IMR-90 (cell line): ENCODE measurements at regions of chr1 and their contacts with region 1.

Region 1: GRCh38 chr1:29033829-29034466 is 89.8 kb downstream of the TMEM200B start:
- DNase-seq: peak; percentile 56
- ATAC-seq: peak; percentile 78
- H3K4me3 ChIP-seq: no peak overlapping the region
- H3K27ac ChIP-seq: no peak overlapping the region
- H3K4me1 ChIP-seq: no peaks in the 10 kb centered on the region
- H3K27me3 ChIP-seq: no peaks in the 10 kb centered on the region
- CTCF ChIP-seq: peak; percentile 87
- POLR2A ChIP-seq: no peak
- RAD21 ChIP-seq: peak; percentile 96

Region 2: GRCh38 chr1:28642847-28643635 is 390.9 kb before region 1 on chr1 and contains the start of gene TAF12:
- CTCF ChIA-PET with region 1: no interaction called
- POLR2A ChIA-PET with region 1: no interaction called
- dilution Hi-C with region 1: no loop called
- in situ Hi-C with region 1: no loop called
- intact Hi-C with region 1: loop called (anchors 10 kb)
- DNase-seq: peak; percentile 94
- ATAC-seq: peak; percentile 83
- H3K4me3 ChIP-seq: peak within 1 kb of the TSS; percentile 77
- H3K27ac ChIP-seq: peak within 1 kb of the TSS; percentile 94
- H3K4me1 ChIP-seq: peaks cover 1% of the 10 kb centered on the region
- H3K27me3 ChIP-seq: no peaks in the 10 kb centered on the region
- CTCF ChIP-seq: peak; percentile 51
- POLR2A ChIP-seq: peak; percentile 98
- RAD21 ChIP-seq: peak; percentile 44
- total RNA-seq, gene TAF12: 31.7 and 39.7 TPM in 2 replicates

Region 3: DNA sequence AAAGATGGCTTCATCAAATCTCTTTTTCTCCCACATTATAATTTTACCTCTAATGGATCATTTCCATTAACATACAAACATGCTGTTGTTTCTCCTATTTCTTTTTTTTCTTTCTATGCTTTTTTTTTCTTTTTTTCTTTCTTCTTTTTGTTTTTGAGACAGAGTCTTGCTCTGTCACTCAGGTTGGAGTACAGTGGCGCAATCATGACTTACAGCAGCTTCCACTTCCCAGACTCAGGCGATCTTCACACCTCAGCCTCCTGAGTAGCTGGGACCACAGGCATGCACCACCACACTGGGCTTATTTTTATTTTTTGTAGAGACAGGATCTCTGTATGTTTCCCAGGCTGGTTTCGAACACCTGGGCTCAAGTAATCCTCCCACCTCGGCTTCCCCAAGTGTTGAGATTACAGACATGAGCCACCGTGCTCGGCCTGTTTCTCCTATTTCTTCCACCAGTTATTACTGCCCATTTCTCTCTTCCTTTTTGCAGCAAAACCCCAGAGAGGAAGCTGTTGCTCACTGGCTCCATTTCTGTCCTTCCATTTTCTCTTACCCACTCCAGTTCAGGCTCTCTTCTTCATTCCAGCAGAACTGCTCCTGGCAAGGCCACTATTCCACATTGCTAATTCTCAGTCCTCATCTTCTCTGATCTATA is 254.1 kb before region 1 on chr1:
- CTCF ChIA-PET with region 1: interaction called, 5 read pairs
- POLR2A ChIA-PET with region 1: no interaction called
- dilution Hi-C with region 1: no loop called
- in situ Hi-C with region 1: loop called (anchors 10 kb)
- intact Hi-C with region 1: loop called (anchors 5 kb)
- DNase-seq: no peak
- ATAC-seq: no peak
- H3K4me3 ChIP-seq: no peak overlapping the region
- H3K27ac ChIP-seq: no peak overlapping the region
- H3K4me1 ChIP-seq: peaks cover 2% of the 10 kb centered on the region; the same call in 1 of the 2 replicates
- H3K27me3 ChIP-seq: no peaks in the 10 kb centered on the region
- CTCF ChIP-seq: no peak
- POLR2A ChIP-seq: no peak
- RAD21 ChIP-seq: no peak

Region 4: DNA sequence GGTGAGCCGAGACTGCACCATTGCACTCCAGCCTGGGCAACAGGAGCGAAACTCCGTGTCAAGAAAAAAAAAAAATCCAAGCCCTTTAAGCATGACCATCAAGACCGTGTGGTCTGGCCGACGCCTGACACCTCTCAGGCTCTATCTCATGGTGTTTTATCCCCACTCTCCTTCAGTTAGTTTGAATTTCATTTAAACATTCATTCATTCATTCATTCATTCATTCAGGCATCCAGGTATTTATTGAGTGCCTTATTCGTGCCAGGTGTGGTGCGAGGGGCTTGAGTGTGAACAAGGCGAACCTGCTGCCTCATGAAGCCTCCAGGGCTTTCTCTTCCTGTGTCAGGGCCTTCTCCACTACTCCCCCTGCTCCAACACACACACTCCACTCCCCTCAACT is 244.5 kb before region 1 on chr1:
- CTCF ChIA-PET with region 1: interaction called, 5 read pairs
- POLR2A ChIA-PET with region 1: no interaction called
- dilution Hi-C with region 1: no loop called
- in situ Hi-C with region 1: loop called (anchors 10 kb)
- intact Hi-C with region 1: loop called (anchors 5 kb)
- DNase-seq: no peak
- ATAC-seq: no peak
- H3K4me3 ChIP-seq: no peak overlapping the region
- H3K27ac ChIP-seq: no peak overlapping the region
- H3K4me1 ChIP-seq: no peaks in the 10 kb centered on the region; the same call in 1 of the 2 replicates
- H3K27me3 ChIP-seq: no peaks in the 10 kb centered on the region
- CTCF ChIP-seq: no peak
- POLR2A ChIP-seq: no peak
- RAD21 ChIP-seq: no peak

Region 5: GRCh38 chr1:28886731-28887418 is 147.1 kb before region 1 on chr1:
- CTCF ChIA-PET with region 1: interaction called, 133 read pairs
- POLR2A ChIA-PET with region 1: interaction called, 3 read pairs
- dilution Hi-C with region 1: no loop called
- in situ Hi-C with region 1: loop called (anchors 5 kb)
- intact Hi-C with region 1: loop called (anchors 1 kb)
- DNase-seq: peak; percentile 48
- ATAC-seq: peak; percentile 83
- H3K4me3 ChIP-seq: peak overlapping the region; percentile 65
- H3K27ac ChIP-seq: no peak overlapping the region; the same call in 1 of the 2 replicates
- H3K4me1 ChIP-seq: peaks cover 11% of the 10 kb centered on the region
- H3K27me3 ChIP-seq: peaks cover 8% of the 10 kb centered on the region
- CTCF ChIP-seq: no peak
- POLR2A ChIP-seq: no peak
- RAD21 ChIP-seq: no peak

Region 6: DNA sequence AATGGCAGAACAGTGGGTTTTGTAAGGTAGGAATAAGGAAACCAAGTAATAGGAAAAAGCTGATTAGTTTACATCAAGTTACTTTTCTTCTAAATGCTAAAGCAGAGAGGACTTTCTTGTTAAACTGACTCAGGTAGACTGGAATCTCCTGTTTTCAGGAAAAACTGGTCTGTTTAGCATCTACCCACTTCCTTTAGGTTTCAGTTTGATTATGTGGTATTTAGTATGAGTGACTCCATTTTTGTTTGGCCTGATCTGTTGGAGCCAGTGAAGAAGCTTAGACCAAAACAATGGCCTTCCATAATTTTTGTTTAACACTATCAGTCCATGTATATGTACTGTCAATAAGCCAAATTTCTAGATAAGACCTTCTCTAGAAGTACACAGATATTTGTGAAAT is 31.2 kb before region 1 on chr1:
- CTCF ChIA-PET with region 1: no interaction called
- POLR2A ChIA-PET with region 1: no interaction called
- dilution Hi-C with region 1: no loop called
- in situ Hi-C with region 1: no loop called
- intact Hi-C with region 1: no loop called
- DNase-seq: no peak
- ATAC-seq: no peak
- H3K4me3 ChIP-seq: no peak overlapping the region
- H3K27ac ChIP-seq: no peak overlapping the region
- H3K4me1 ChIP-seq: no peaks in the 10 kb centered on the region
- H3K27me3 ChIP-seq: no peaks in the 10 kb centered on the region
- CTCF ChIP-seq: no peak
- POLR2A ChIP-seq: no peak
- RAD21 ChIP-seq: no peak

Region 7: DNA sequence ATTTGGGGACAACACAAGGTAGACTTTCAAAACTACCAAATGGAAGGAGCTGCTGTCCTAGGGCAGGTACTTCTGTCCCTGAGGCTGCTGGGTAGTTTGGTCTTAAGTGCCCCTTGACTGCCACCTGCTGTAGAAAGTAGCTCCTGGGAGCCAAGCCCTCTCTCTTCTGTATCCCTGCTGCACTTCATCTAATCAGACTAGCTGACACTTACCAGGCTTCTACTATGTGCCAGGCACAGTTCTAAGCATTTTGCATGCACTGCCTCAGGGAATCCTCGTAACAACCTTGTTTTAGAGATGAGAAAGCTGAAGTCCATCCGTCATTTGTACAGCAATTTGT is 163.6 kb after region 1 on chr1:
- CTCF ChIA-PET with region 1: interaction called, 10 read pairs
- POLR2A ChIA-PET with region 1: no interaction called
- dilution Hi-C with region 1: no loop called
- in situ Hi-C with region 1: loop called (anchors 5 kb)
- intact Hi-C with region 1: no loop called
- DNase-seq: peak; percentile 62
- ATAC-seq: peak; percentile 37
- H3K4me3 ChIP-seq: no peak overlapping the region
- H3K27ac ChIP-seq: peak overlapping the region; percentile 42; the same call in 1 of the 2 replicates
- H3K4me1 ChIP-seq: peaks cover 26% of the 10 kb centered on the region
- H3K27me3 ChIP-seq: no peaks in the 10 kb centered on the region
- CTCF ChIP-seq: peak; percentile 51
- POLR2A ChIP-seq: no peak
- RAD21 ChIP-seq: peak; percentile 61

Region 8: DNA sequence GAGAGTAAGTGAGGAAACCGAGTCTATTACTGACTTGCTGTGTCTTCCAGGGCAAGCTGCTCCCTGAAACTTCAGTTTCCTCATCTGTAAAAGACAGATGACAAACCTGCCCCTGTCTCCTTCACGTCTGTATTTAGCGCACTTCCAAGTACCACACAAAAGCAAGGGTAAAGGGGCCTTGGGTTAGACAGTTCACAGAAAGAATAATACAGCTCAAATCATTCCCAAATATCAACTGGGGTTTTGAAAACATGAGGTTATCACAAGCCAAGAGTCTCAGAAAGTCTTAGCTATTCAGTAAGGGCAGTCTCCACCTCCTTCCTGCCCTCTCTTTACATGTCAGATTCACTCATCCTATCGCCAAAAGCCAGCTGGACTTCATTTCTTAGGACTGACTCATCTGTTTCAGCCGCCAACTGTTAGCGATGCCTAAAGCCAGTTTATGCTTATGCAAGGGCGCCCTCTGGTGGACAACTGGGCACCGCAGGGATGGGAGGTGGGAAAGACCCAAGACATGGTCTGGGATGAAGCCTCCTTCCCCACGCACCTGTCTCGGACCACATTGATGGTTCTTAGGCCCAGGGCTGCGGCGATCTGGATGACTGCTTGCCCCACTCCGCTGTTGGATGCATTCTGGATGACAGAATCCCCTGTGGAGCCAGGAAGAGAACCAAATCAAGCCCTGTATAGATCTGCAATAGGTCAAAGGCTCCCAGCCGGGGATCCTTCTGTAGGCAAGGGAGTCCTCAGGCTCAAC is 168.8 kb after region 1 on chr1:
- CTCF ChIA-PET with region 1: interaction called, 10 read pairs
- POLR2A ChIA-PET with region 1: no interaction called
- dilution Hi-C with region 1: no loop called
- in situ Hi-C with region 1: loop called (anchors 5 kb)
- intact Hi-C with region 1: loop called (anchors 1 kb)
- DNase-seq: peak; percentile 99
- ATAC-seq: peak; percentile 93
- H3K4me3 ChIP-seq: no peak overlapping the region
- H3K27ac ChIP-seq: peak overlapping the region; percentile 85
- H3K4me1 ChIP-seq: peaks cover 16% of the 10 kb centered on the region
- H3K27me3 ChIP-seq: no peaks in the 10 kb centered on the region
- CTCF ChIP-seq: peak; percentile 98
- POLR2A ChIP-seq: peak; percentile 52; the same call in 1 of the 2 replicates
- RAD21 ChIP-seq: peak; percentile 99